Left cardiac atrium (tissue), 4 donors: ENCODE measurements at regions of chr1 and their contacts with region 1.

Region 1: DNA sequence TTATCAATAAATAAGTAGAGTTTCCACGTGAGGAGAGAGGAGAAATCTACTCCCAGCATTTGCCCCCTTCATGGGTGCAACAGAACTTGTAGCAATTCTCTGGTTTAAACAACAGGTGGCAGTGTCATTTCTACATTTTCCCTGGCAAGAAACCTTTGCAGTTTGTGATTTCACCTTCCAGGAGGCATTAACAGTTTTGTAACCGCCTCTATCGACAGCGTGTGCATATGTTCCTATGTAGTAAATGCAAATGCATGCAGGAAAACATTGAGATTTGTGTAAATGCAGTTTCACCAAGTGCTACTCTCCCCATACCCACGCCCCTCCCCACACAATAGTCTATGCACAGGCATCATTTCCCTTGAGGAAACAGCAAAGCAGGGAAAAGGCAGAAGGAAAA is 494.7 kb downstream of the SMYD3 start:
- DNase-seq: no peak
- ATAC-seq: no peak

Region 2: DNA sequence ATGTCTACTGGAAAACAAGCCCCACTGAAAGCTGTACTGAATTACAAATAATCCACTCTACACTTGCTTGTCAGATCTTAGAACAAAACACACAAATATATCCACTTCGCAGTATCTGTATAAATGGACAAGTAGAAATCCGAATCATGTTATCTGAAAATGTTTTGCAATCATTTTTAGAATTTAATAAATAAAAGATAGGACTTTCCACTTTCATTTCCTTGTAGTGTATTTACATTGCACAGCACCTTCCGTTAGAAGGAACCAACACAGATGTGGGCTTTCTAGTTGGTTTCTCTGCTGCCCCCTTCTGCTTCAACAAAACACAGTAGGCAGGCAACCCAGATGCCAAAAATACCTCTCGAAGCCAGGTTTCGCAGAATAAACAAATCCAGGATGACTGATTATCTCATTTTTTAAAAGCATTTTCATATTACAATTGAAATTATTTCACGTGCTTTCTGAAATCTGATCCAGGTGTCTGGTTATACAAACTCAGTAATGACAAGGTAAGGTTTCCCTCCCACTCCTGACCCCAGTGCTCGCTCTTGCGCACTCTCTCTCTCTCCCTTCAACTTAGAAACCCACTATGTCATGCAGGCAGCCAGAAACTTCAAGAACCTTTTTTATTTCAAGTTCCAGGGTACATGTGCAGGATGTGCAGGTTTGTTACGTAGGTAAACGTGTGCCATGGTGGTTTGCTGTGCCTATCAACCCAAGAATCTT is 104.9 kb after region 1 on chr1:
- intact Hi-C with region 1: loop called in 1 of 2 experiments (anchors 10 kb)
- DNase-seq: no peak
- ATAC-seq: peak; percentile 71 to 83

Region 3: GRCh38 chr1:246450611-246451251 is 438.4 kb after region 1 on chr1:
- intact Hi-C with region 1: loop called in 1 of 2 experiments (anchors 2 kb)
- DNase-seq: no peak
- ATAC-seq: no peak

Region 4: GRCh38 chr1:246497331-246497915 is 485.1 kb after region 1 on chr1:
- intact Hi-C with region 1: loop called in 1 of 2 experiments (anchors 5 kb)
- DNase-seq: no peak
- ATAC-seq: peak in 1 of 2 donors; percentile 35